Caco-2 (cell line): ENCODE measurements at regions of chr14 and their contacts with region 1.

Region 1: GRCh38 chr14:71523630-71524319 is 408.5 kb upstream of the RGS6 start:
- DNase-seq: no peak
- H3K4me3 ChIP-seq: no peak overlapping the region
- H3K4me3 Mint-ChIP-seq: no peak overlapping the region
- H3K27ac Mint-ChIP-seq: peak overlapping the region; percentile 92
- H3K4me1 ChIP-seq: peaks cover 46% of the 10 kb centered on the region
- H3K4me1 Mint-ChIP-seq: peaks cover 55% of the 10 kb centered on the region
- H3K27me3 ChIP-seq: no peaks in the 10 kb centered on the region
- H3K27me3 Mint-ChIP-seq: no peaks in the 10 kb centered on the region
- CTCF ChIP-seq: no peak

Region 2: GRCh38 chr14:71380271-71380670 is 143.5 kb before region 1 on chr14:
- CTCF ChIA-PET with region 1: no interaction called
- POLR2A ChIA-PET with region 1: no interaction called
- intact Hi-C with region 1: loop called (anchors 5 kb)
- DNase-seq: peak; percentile 36 to 41
- H3K4me3 ChIP-seq: no peak overlapping the region
- H3K4me3 Mint-ChIP-seq: no peak overlapping the region
- H3K27ac Mint-ChIP-seq: peak overlapping the region; percentile 10
- H3K4me1 ChIP-seq: peaks cover 50% of the 10 kb centered on the region
- H3K4me1 Mint-ChIP-seq: peaks cover 52% of the 10 kb centered on the region
- H3K27me3 ChIP-seq: no peaks in the 10 kb centered on the region
- H3K27me3 Mint-ChIP-seq: no peaks in the 10 kb centered on the region
- CTCF ChIP-seq: no peak

Region 3: DNA sequence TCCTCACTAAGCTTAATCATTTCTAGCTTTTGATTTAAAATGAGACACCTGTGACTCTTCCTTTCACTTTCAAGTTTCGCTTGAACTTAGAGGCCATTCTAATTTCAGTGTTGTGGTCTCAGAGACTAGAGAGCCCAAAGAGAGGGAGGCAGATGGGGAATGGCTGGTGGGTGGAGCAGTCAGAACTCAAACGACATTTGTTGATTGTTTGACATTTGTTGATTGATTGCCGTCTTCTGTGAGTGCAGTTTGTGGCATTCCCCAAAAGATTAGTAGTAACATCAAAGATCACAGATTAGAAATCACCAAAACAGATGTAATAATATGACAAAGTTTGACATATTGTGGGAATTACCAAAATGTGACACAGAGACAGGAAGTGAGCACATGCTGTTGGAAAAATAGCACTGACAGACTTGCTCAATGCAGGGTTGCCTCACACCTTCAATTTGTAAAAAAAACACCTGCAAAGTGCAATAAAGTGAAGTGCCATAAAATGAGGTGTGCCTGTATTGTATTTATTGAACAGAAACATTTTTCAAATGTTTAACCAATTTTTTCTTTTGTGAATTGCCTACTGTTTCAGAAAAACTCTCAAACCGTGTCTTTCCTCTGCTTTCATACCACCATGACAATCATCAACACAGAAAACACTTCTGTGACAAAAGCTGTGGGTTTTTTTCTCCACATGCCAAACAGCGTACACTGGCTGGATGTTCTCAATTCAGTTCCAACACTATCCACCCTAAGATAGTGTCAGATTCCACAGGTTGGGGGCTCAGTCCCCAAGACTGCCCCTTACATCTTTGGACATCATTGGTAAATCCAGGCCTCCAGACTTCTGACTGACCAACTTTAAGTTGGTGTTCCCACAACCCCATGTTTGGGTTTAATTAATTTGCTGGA is 32.1 kb after region 1 on chr14:
- CTCF ChIA-PET with region 1: no interaction called
- POLR2A ChIA-PET with region 1: no interaction called
- intact Hi-C with region 1: loop called (anchors 1 kb)
- DNase-seq: peak; percentile 69 to 72
- H3K4me3 ChIP-seq: no peak overlapping the region
- H3K4me3 Mint-ChIP-seq: peak overlapping the region; percentile 68
- H3K27ac Mint-ChIP-seq: peak overlapping the region; percentile 91
- H3K4me1 ChIP-seq: peaks cover 57% of the 10 kb centered on the region
- H3K4me1 Mint-ChIP-seq: peaks cover 35% of the 10 kb centered on the region
- H3K27me3 ChIP-seq: no peaks in the 10 kb centered on the region
- H3K27me3 Mint-ChIP-seq: no peaks in the 10 kb centered on the region
- CTCF ChIP-seq: no peak

Region 4: GRCh38 chr14:71574976-71575375 is 51.2 kb after region 1 on chr14:
- CTCF ChIA-PET with region 1: no interaction called
- POLR2A ChIA-PET with region 1: no interaction called
- intact Hi-C with region 1: no loop called
- DNase-seq: peak in 1 of 2 experiments; percentile 15
- H3K4me3 ChIP-seq: no peak overlapping the region
- H3K4me3 Mint-ChIP-seq: no peak overlapping the region
- H3K27ac Mint-ChIP-seq: peak overlapping the region; percentile 61
- H3K4me1 ChIP-seq: peaks cover 17% of the 10 kb centered on the region
- H3K4me1 Mint-ChIP-seq: peaks cover 36% of the 10 kb centered on the region
- H3K27me3 ChIP-seq: no peaks in the 10 kb centered on the region
- H3K27me3 Mint-ChIP-seq: no peaks in the 10 kb centered on the region
- CTCF ChIP-seq: no peak